Cardiac septum (tissue), 1 donor: ENCODE measurements at regions of chr14 and their contacts with region 1.

Region 1: DNA sequence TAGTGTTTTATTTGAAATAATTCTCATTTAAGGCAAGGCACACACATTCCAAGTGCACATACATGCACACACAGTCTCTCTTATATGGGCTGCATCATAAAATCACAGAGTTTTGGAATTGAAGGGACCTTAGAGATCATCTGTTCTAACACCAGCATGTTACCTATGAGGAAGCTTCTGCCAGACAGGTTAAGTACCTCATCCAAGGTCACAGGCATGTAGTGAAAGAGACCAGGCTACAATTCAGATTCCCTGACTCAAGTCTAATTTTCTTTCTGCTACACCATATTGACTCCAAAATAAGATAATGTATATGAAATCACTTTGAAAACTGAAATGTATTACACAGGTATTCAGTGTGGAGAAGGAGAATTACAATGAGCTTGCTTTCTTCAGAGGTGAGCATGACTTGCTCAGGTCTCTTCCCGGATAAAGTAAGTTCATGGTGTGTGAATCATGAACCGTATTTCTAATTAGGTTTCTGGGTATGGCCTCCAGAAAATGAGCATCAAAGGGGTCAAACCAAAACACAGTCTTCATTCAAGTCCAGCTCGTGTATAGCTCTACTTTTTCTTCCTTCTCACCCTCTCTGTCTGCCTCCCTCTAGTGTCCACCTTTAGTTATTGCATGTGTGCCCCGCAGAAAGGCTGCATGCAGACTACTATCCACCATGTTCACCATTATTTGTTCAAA is 411.9 kb downstream of the FUT8 start:
- DNase-seq: no peak

Region 2: GRCh38 chr14:65164068-65164824 is 660.2 kb before region 1 on chr14:
- intact Hi-C with region 1: loop called (anchors 5 kb)
- DNase-seq: no peak

Region 3: GRCh38 chr14:65222440-65222858 is 602.0 kb before region 1 on chr14:
- intact Hi-C with region 1: loop called (anchors 5 kb)
- DNase-seq: no peak

Region 4: DNA sequence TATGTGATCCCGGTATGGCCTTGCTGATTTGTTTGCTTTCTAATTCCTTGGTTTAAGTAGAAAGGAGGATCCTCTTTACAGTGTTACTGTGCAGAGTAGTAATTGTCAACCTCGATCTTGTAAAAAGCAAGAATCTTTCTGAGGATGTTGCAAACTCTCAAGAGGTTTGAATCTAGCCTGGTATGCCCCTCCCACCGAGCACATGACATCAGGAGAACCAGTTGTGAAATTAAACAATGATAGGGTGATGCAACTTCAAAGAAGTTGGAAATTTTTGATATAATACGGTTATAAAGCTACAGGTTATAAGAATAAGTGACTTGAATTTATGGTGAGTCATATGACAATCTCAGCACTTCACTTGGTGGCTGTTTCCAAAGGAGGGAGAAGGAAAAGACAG is 446.8 kb before region 1 on chr14:
- intact Hi-C with region 1: no loop called
- DNase-seq: no peak